A549 (cell line): ENCODE measurements at regions of chr6 and their contacts with region 1.

Region 1: DNA sequence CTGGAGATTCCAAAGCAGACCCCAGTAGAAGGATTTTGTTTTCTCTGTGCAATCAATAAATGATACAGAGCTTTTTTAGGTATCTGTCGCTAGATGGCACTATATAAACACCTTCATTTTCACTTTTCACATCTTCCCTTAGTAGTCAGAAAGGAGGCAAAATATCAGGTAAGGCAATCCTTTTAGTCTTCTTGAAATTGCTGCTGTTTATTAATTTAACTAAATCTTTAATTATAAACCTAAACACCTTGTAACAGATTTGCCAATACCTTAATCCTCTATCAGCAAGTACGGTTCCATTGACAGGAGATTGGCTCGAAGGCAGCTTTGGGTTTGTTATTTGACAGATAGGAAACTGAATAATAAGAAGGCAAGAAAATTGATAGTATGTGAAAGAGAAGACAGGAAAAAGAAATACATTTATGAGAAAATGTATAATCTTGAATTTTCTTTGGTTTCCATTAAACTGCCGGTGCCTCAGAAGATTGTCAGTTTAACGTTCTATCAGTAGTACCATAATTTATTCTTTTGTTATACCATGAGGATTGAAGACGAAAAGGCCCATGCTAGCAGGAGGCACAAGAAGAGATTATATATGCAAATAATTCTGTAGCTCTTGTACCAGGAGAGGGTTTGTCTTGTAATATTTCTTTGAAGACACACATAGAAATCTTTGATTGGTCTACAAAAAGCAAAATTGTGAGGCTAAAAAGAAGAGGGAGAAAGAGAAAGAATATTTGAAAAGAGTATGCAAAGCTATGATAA is 23.5 kb upstream of the IBTK start:
- DNase-seq: peak; percentile 36 to 49
- ATAC-seq: peak in 1 of 2 experiments; percentile 58; a peak in 3 of 6 replicates
- H3K4me3 ChIP-seq: no peak overlapping the region
- H3K27ac ChIP-seq: peak overlapping the region in 1 of 2 experiments; percentile 61; a peak in 1 of 6 replicates
- H3K4me1 ChIP-seq: peaks cover 8% of the 10 kb centered on the region; the same call in 1 of the 3 replicates
- CTCF ChIP-seq: peak; percentile 65
- EP300 ChIP-seq: no peak
- POLR2A ChIP-seq: no peak
- RAD21 ChIP-seq: peak; percentile 74 to 83

Region 2: DNA sequence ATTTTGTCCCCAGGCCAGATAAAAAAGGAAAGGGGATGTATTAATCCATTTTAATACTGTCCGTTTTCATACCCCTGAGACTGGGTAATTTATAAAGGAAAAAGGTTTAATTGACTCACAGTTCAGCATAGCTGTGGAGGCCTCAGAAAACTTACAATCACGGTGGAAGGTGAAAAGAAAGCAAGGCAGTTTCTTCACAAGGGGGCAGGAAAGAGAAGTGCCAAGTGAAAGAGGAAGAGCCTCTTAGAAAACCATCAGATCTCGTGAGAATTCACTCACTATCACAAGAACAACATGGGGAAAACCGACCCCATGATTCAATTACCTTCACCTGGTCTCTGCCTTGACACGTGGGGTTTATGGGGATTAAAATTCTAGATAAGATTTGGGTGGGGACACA is 176.0 kb before region 1 on chr6:
- CTCF ChIA-PET with region 1: no interaction called
- POLR2A ChIA-PET with region 1: no interaction called
- DNase-seq: no peak
- ATAC-seq: no peak
- H3K4me3 ChIP-seq: no peak overlapping the region
- H3K27ac ChIP-seq: no peak overlapping the region
- H3K4me1 ChIP-seq: peaks cover 14% of the 10 kb centered on the region; the same call in 2 of the 3 replicates
- CTCF ChIP-seq: no peak
- EP300 ChIP-seq: no peak
- POLR2A ChIP-seq: no peak
- RAD21 ChIP-seq: no peak

Region 3: GRCh38 chr6:83057705-83058321 is 786.8 kb after region 1 on chr6:
- CTCF ChIA-PET with region 1: interaction called, 23 read pairs
- POLR2A ChIA-PET with region 1: no interaction called
- DNase-seq: peak; percentile 25 to 45
- ATAC-seq: peak; percentile 83 to 86; a peak in 5 of 6 replicates
- H3K4me3 ChIP-seq: no peak overlapping the region
- H3K27ac ChIP-seq: no peak overlapping the region
- H3K4me1 ChIP-seq: no peaks in the 10 kb centered on the region
- CTCF ChIP-seq: peak; percentile 69
- EP300 ChIP-seq: no peak
- POLR2A ChIP-seq: no peak
- RAD21 ChIP-seq: peak; percentile 68 to 69